ENCODE measurements at regions of chr12 and their contacts with region 1.

Region 1: DNA sequence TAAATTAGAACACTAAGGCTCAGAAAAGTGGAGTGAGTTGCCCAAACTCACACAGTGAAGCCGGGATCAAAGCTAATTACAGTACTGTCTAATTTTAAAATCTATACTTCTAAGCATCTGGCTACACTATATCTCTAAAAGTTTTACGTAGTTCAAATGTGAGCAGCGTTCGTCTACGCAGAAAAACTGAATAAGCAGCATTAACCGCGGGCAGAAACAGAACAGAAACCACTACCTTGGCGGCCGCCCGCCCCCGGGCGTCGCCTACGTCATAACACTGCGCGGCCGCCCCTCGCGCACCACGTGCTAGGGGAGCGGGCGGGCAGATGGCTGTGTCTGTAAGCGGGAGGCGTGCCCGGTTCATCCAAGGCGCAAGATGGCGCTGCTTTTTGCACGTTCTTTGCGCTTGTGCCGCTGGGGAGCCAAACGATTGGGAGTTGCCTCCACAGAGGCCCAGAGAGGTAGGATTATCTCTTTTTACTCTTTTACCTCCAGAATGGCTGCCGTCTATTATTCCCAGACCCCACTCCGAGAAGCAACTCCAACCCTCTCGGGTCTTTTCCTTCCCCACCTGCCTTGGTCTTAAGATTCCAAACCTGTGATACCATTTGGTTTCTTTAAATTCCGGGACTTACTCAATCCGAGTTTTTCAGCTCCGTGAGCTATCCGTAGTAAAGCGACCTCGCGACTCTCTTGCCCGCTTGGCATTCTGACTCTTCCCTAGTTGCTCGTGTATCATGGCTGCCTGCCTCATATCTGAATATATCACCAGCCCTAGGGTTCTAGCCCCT is at the start of gene SPRYD4:
- DNase-seq: peak; percentile 92
- H3K4me3 ChIP-seq: peak within 1 kb of the TSS; percentile 66 to 93 (median 93)
- H3K27ac ChIP-seq: peak within 1 kb of the TSS; percentile 58
- H3K4me1 ChIP-seq: peaks cover 7% of the 10 kb centered on the region
- H3K27me3 ChIP-seq: no peaks in the 10 kb centered on the region
- CTCF ChIP-seq: peak; percentile 8 to 14
- POLR2A ChIP-seq: peak; percentile 97
- total RNA-seq, gene SPRYD4: 3.4 and 3.5 TPM in 2 replicates

Region 2: DNA sequence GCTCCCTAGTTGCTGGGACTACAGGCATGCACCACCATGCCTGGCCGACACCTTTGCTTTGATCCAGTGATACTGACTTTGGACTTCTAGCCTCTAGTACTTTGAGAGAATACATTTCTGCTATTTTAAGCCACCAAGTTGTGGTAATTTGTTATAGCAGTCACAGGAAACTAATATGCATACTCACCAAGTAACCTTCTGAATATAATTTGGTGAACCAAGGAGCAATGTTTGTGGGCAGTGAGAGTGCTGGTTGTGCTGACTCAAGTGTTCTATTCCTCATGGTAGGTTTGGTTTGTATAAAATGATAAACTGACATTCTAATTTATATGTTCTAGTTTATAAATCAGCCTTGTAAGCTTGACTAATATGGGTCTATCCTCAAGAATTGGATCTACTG is 583.3 kb before region 1 on chr12:
- CTCF ChIA-PET with region 1: no interaction called
- POLR2A ChIA-PET with region 1: no interaction called
- dilution Hi-C with region 1: no loop called
- intact Hi-C with region 1: no loop called
- DNase-seq: no peak
- H3K4me3 ChIP-seq: no peak overlapping the region
- H3K27ac ChIP-seq: no peak overlapping the region
- H3K4me1 ChIP-seq: no peaks in the 10 kb centered on the region
- H3K27me3 ChIP-seq: peaks cover 2 to 5% of the 10 kb centered on the region in 2 experiments
- CTCF ChIP-seq: no peak
- POLR2A ChIP-seq: no peak

Region 3: GRCh38 chr12:56206457-56207166 is 261.8 kb before region 1 on chr12:
- CTCF ChIA-PET with region 1: interaction called, 10 read pairs
- POLR2A ChIA-PET with region 1: no interaction called
- dilution Hi-C with region 1: no loop called
- intact Hi-C with region 1: no loop called
- DNase-seq: peak; percentile 52
- H3K4me3 ChIP-seq: no peak overlapping the region
- H3K27ac ChIP-seq: no peak overlapping the region
- H3K4me1 ChIP-seq: peaks cover 17% of the 10 kb centered on the region
- H3K27me3 ChIP-seq: no peaks in the 10 kb centered on the region
- CTCF ChIP-seq: peak; percentile 63 to 73
- POLR2A ChIP-seq: peak; percentile 30

Region 4: GRCh38 chr12:56299853-56300643 is 168.4 kb before region 1 on chr12 and contains the start of gene CS:
- CTCF ChIA-PET with region 1: interaction called, 6 read pairs
- POLR2A ChIA-PET with region 1: no interaction called
- dilution Hi-C with region 1: no loop called
- intact Hi-C with region 1: loop called (anchors 1 kb)
- DNase-seq: peak; percentile 96
- H3K4me3 ChIP-seq: peak within 1 kb of the TSS; percentile 2 to 91 (median 88)
- H3K27ac ChIP-seq: peak within 1 kb of the TSS; percentile 77
- H3K4me1 ChIP-seq: peaks cover 26% of the 10 kb centered on the region
- H3K27me3 ChIP-seq: no peaks in the 10 kb centered on the region
- CTCF ChIP-seq: no peak
- POLR2A ChIP-seq: peak; percentile 1
- total RNA-seq, gene CS: 296 and 312 TPM in 2 replicates

Region 5: GRCh38 chr12:56333679-56334489 is 134.5 kb before region 1 on chr12 and contains the start of gene PAN2:
- CTCF ChIA-PET with region 1: interaction called, 13 read pairs
- POLR2A ChIA-PET with region 1: no interaction called
- dilution Hi-C with region 1: no loop called
- intact Hi-C with region 1: loop called (anchors 1 kb)
- DNase-seq: peak; percentile 97
- H3K4me3 ChIP-seq: peak within 1 kb of the TSS; percentile 45 to 70 (median 49)
- H3K27ac ChIP-seq: peak within 1 kb of the TSS; percentile 97
- H3K4me1 ChIP-seq: peaks cover 16% of the 10 kb centered on the region
- H3K27me3 ChIP-seq: no peaks in the 10 kb centered on the region
- CTCF ChIP-seq: peak; percentile 65 to 66
- POLR2A ChIP-seq: peak; percentile 76
- total RNA-seq, gene PAN2: 21.5 and 24.4 TPM in 2 replicates

Region 6: GRCh38 chr12:56377310-56377988 is 91.0 kb before region 1 on chr12:
- CTCF ChIA-PET with region 1: interaction called, 15 read pairs
- POLR2A ChIA-PET with region 1: no interaction called
- dilution Hi-C with region 1: no loop called
- intact Hi-C with region 1: loop called (anchors 1 kb)
- DNase-seq: peak; percentile 29
- H3K4me3 ChIP-seq: no peak overlapping the region
- H3K27ac ChIP-seq: no peak overlapping the region
- H3K4me1 ChIP-seq: peaks cover 13% of the 10 kb centered on the region
- H3K27me3 ChIP-seq: no peaks in the 10 kb centered on the region
- CTCF ChIP-seq: peak in 1 of 2 donors; percentile 18
- POLR2A ChIP-seq: no peak

Region 7: GRCh38 chr12:56521590-56522371 is 53.4 kb after region 1 on chr12 and contains the start of gene RBMS2:
- CTCF ChIA-PET with region 1: no interaction called
- POLR2A ChIA-PET with region 1: no interaction called
- dilution Hi-C with region 1: no loop called
- intact Hi-C with region 1: no loop called
- DNase-seq: peak; percentile 94
- H3K4me3 ChIP-seq: peak within 1 kb of the TSS; percentile 61 to 98 (median 95)
- H3K27ac ChIP-seq: peak within 1 kb of the TSS; percentile 87
- H3K4me1 ChIP-seq: peaks cover 57% of the 10 kb centered on the region
- H3K27me3 ChIP-seq: no peaks in the 10 kb centered on the region
- CTCF ChIP-seq: no peak
- POLR2A ChIP-seq: no peak
- total RNA-seq, gene RBMS2: 95.4 and 103 TPM in 2 replicates